PC-9 (cell line): ENCODE measurements at regions of chr19 and their contacts with region 1.

Region 1: DNA sequence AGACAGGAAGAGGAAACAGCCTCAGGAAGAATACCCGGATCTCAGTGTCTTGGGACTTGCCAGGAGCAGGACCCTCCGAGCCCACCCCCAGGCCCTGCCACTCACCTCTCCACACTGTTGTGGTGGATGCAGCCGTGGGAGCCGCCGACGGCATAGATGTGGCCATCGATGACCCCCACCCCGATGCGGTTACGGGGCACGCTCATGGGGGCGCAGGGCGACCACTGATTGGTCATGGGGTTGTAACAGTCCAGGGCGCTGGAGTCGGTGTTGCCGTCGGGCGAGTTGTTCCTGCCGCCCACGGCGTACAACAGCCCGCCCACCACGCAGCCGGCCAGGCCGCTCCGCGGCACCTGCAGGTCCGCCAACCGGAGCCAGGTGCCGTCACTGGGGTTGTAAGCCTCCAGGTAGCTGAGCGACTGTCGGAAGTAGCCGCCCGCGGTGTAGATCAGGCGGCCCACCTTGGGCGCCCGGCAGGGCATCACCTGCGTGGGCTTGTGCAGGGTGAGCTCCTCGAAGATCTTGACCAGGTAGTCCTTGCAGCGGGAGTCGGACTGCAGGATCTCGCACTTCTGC is 11.6 kb downstream of the KEAP1 start:
- DNase-seq: no peak
- H3K4me3 ChIP-seq: no peak overlapping the region
- H3K27ac ChIP-seq: no peak overlapping the region
- H3K4me1 ChIP-seq: no peaks in the 10 kb centered on the region
- H3K27me3 ChIP-seq: no peaks in the 10 kb centered on the region
- CTCF ChIP-seq: no peak

Region 2: DNA sequence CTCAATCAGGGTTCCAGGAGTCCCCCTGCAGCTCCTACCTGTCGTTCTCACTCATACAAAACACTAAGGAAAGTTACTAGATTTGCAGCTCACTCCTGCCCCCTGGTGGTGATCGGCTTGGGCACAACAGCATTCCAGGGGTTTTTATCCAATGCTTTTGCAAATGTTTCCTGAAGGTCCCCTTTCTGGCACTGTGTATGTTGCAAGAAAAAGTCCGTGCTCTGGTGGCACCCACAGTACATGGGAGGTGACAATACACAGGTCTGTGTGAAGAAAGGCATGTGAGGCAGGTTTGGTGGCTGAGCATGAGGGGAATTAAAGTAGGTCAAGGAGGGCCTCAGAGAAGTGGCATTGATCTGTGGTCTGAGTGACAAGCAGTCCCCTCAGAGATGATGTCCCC is 102.6 kb before region 1 on chr19:
- CTCF ChIA-PET with region 1: interaction called, 19 read pairs
- POLR2A ChIA-PET with region 1: no interaction called
- intact Hi-C with region 1: no loop called
- DNase-seq: peak; percentile 62 to 81
- H3K4me3 ChIP-seq: no peak overlapping the region
- H3K27ac ChIP-seq: no peak overlapping the region
- H3K4me1 ChIP-seq: no peaks in the 10 kb centered on the region
- H3K27me3 ChIP-seq: no peaks in the 10 kb centered on the region
- CTCF ChIP-seq: peak; percentile 99

Region 3: DNA sequence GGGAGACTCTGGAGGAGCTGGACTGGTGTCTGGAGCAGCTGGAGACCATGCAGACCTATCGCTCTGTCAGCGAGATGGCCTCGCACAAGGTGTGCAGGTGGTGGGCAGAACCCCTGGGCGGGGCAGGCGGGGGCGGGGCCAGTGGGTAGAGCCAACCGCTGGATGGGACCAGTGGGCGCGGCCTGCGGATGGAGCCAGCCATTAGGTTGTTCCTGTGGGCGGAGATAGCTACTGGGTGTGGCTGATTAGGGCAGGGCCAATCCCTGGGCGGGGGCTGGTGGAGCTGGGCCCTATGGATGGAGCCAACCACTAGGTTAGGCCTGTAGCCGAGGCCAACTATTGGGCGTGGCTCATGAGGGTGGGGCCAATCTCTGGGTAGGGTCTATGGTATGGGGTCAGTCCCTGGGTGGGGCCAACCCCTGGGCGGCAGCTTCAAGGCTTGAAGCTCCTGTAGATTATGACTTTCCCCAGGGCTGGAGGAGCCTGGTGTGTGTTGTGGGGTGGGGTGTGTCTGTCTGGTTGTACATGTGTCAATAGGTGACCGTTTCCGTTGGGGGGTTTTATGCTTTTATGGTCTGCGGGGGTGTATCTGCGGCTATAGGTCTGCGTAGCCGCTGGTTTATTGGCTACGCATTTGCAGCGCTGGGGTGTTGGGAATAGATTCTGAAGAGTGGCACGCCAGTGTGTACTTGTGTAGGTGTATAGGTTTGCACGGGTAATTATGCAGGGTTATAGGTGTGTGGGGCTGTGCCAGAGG is 40.5 kb before region 1 on chr19:
- CTCF ChIA-PET with region 1: interaction called, 12 read pairs
- POLR2A ChIA-PET with region 1: no interaction called
- intact Hi-C with region 1: no loop called
- DNase-seq: no peak
- H3K4me3 ChIP-seq: no peak overlapping the region
- H3K27ac ChIP-seq: no peak overlapping the region
- H3K4me1 ChIP-seq: no peaks in the 10 kb centered on the region
- H3K27me3 ChIP-seq: no peaks in the 10 kb centered on the region
- CTCF ChIP-seq: no peak